RWPE1 (cell line): ENCODE measurements at regions of chr19 and their contacts with region 1.

Region 1: GRCh38 chr19:40278361-40279035 is 6.6 kb downstream of the AKT2 start:
- DNase-seq: no peak
- H3K27ac ChIP-seq: peak overlapping the region; percentile 36; the same call in 1 of the 2 replicates
- CTCF ChIP-seq: no peak

Region 2: DNA sequence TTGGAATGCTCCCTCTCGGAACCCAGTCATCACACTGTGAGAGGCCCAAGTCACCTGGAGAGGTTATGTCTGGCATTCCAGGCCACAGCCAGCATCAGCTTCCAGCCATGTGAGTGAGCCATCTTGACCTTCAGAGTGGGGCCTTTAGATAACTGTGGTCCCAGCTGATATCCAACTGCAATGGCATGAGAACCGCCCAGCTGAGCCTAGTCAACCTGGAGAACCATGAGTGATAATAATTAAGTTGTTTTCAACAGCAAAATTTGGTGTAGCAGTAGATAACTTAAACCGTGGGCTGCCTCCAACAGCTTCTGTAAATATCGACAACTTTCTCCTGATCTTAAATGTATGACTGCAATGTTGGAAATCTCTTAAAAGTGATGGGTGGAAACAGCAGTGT is 469.1 kb before region 1 on chr19:
- CTCF ChIA-PET with region 1: interaction called, 10 read pairs
- POLR2A ChIA-PET with region 1: no interaction called
- DNase-seq: no peak
- H3K27ac ChIP-seq: no peak overlapping the region
- CTCF ChIP-seq: no peak

Region 3: GRCh38 chr19:40155749-40156265 is 122.7 kb before region 1 on chr19:
- CTCF ChIA-PET with region 1: no interaction called
- POLR2A ChIA-PET with region 1: no interaction called
- DNase-seq: no peak
- H3K27ac ChIP-seq: no peak overlapping the region
- CTCF ChIP-seq: no peak

Region 4: DNA sequence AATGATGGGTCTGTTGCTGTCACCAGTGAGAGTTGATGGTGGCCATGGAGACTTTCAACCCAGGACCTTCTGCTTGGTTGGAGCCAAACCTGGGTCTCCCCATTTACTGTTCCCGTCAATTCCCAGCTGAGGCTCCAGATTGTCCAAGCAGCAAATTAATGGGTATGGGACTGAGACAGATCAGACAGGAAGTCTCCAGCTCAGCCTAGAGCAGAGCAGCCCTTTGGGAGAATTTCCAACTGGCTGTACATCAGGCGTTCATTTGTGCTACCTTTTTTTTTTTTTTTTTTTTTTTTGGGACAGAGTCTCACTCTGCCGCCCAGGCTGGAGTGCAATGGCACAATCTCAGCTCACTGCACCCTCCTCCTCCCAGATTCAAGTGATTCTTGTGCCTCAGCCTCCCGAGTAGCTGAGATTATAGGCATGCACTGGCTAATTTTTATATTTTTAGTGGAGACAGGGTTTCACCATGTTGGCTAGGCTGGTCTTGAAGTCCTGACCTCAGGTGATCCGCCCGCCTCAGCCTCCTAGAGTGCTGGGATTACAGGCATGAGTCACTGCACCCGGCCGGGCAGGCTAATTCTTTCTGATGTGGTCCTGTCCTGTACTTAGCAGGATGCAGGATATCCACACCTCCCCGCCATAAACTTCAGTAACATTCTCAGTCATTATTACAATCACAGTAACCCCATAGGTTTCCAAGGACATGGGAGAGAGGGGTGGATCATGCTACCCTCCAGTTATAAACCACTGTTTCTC is 78.0 kb before region 1 on chr19:
- CTCF ChIA-PET with region 1: no interaction called
- POLR2A ChIA-PET with region 1: no interaction called
- DNase-seq: no peak
- H3K27ac ChIP-seq: peak overlapping the region; percentile 46
- CTCF ChIP-seq: no peak